ENCODE measurements at regions of chr13 and their contacts with region 1.

Region 1: DNA sequence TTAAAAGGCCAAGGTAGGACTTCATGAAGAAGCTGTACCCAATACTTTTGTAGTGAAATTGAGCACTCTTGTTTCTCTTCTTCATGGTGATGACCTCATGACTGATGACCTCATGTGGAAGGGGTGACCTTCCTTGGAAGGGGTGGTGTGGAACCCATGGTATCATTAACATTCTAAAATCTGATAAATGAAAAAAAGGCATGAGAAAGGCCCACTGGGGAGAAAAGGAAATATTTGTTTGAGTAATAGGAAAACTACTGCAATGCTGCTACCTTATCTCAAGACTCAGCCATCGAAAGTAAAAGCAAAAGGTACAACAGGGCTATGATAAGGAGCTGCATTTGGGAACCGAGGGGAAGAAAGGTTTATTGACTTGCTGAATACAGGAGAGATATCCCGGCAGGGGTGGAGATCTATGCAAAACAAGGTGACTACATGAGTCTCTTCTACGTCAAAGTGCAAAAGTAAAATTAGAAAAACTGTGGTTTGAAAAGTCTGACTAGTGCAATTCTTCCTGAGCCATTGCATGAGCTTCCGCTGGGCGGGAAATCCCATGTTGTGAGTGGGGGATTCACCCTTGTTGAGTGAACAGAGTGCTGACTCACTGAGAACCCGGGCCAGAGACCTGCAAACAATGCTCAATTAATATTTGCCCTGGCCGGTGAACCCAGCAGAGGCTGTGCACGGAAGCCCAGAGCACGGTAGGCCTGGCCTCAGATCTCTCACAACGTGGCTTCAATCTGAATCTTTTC is 138.9 kb upstream of the RFC3 start:
- DNase-seq: peak; percentile 71
- H3K4me3 Mint-ChIP-seq: peak overlapping the region; percentile 73
- H3K27ac Mint-ChIP-seq: peak overlapping the region; percentile 91
- H3K4me1 Mint-ChIP-seq: peaks cover 36% of the 10 kb centered on the region
- H3K27me3 Mint-ChIP-seq: peaks cover 2% of the 10 kb centered on the region

Region 2: DNA sequence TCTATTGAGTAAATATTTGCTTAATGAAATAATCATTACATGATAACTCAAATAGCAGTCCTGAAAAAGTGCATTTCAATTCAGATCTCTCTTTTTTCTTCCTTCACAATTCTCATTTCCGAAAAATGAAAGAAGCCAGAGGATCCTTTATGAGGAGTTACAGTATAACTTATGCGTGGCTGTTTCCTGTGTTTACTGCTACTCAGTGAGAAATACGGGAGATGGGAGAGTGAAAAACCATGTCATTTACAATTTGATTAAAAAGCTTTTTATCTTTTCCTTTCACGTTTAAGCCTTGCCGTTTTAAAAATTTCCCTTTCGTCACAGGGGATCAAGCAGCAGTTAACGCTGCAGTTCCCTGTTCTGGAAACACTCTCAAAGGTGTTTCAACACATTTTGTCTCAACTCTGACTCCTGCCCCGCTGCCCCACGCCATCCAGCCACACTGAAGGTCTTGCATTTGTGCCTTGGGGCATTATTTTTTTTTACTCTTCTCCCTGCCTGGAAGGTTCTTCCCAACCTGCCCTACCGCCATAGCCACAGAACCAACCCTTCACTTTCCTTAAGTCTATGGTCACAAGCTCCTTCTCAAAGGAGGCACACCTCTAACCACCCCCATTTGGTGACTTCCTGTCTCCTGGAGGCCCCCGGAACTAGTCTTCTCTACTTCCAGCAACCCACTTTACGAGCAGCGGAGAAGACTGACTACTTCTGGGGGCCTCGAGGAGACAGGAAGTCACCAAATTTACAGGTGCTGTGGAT is 645.9 kb before region 1 on chr13:
- intact Hi-C with region 1: no loop called
- DNase-seq: no peak
- H3K4me3 Mint-ChIP-seq: peak overlapping the region; percentile 83
- H3K27ac Mint-ChIP-seq: peak overlapping the region; percentile 94
- H3K4me1 Mint-ChIP-seq: peaks cover 13% of the 10 kb centered on the region
- H3K27me3 Mint-ChIP-seq: peaks cover 2% of the 10 kb centered on the region

Region 3: DNA sequence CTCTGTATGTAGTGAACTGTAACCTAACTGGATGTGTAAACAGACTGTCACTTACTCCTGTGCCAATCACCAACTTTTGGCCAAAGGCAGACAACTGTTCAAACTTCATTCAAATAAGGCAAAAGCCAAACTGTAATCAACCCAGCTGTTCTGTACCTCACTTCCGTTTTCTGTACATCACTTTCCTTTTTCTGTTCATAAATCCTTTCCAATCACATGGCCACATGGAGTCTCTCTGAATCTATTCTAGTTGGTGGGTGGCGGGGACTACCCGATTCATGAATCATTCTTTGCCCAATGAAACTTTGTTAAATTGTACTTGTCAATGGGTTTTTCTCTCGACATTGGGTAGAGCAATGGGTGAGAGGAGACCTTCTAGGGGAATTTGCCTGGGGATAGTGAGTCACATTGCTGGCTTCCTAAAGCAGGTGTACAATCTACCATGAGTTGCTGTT is 39.4 kb before region 1 on chr13:
- intact Hi-C with region 1: loop called (anchors 1 kb)
- DNase-seq: no peak
- H3K4me3 Mint-ChIP-seq: no peak overlapping the region
- H3K27ac Mint-ChIP-seq: peak overlapping the region; percentile 75
- H3K4me1 Mint-ChIP-seq: peaks cover 45% of the 10 kb centered on the region
- H3K27me3 Mint-ChIP-seq: peaks cover 2% of the 10 kb centered on the region

Region 4: GRCh38 chr13:34201050-34201913 is 522.2 kb after region 1 on chr13:
- intact Hi-C with region 1: no loop called
- DNase-seq: no peak
- H3K4me3 Mint-ChIP-seq: no peak overlapping the region
- H3K27ac Mint-ChIP-seq: no peak overlapping the region
- H3K4me1 Mint-ChIP-seq: no peaks in the 10 kb centered on the region
- H3K27me3 Mint-ChIP-seq: no peaks in the 10 kb centered on the region

Measured in activated T-helper 1 cell treated with anti-CD3 and anti-CD28 coated beads, Interleukin-12 subunit alpha, Interleukin-12 subunit beta, Interleukin-2, Interleukin-4 antibody, amounts not matched to agents 30 ng/mL and 10 ng/mL and 1 ng/mL, durations not matched to agents 14 hours and 24 hours and 36 hours (primary cell).